ENCODE measurements at regions of chr14 and their contacts with region 1.

Region 1: GRCh38 chr14:91177073-91178034 is 63.5 kb downstream of the DGLUCY start:
- DNase-seq: peak; percentile 84
- H3K4me3 Mint-ChIP-seq: no peak overlapping the region
- H3K27ac Mint-ChIP-seq: peak overlapping the region; percentile 58
- H3K4me1 Mint-ChIP-seq: peaks cover 9% of the 10 kb centered on the region
- H3K27me3 Mint-ChIP-seq: no peaks in the 10 kb centered on the region

Region 2: DNA sequence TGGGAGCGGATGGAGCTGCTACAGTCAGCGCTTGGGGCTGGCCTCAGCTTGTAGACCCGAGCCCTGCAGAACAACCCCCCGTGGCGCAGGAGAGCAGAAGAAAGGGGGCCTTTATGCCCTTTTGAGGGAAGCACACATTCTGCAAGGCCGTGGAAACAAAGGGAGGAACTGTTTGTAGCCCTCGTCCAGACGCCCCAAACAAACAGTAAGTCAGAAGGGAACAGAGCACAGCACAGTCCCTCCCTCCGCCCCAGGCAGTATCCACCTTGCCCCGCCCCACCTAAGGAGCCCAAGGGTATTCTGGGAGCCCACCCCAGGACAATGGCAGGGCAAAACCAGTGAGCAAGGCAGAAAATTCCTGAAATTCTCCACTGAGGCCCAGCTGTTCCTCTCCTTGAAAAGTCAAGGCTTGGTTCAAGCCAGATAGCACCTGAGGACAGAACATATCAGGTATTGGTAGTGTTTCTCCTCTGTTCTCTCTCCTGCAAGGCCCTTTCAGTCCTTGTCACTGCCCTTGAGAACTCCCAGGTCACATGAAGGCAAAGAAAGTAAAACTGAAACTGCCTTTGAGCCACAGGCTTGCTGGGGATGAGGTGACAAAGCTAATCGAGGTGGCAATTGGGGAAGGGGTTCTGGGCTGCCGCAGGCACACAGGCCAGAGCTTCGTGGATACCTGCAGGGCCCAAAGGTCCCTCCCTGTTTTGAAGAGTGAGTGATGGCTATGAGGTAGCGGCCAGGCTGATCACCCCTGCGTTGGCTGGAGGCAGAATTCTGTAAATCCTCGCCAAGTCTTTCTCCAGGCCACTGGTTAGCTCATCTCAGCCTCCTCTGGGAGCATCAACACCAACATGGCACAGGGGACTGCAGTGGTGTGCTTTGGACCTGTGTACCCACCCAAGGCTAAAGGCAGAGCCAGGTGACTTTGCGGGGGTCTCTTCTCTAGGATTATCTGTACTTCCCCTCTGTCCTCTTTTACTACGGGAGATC is 63.0 kb before region 1 on chr14:
- CTCF ChIA-PET with region 1: interaction called, 10 read pairs
- intact Hi-C with region 1: no loop called
- DNase-seq: peak; percentile 82
- H3K4me3 Mint-ChIP-seq: peak overlapping the region; percentile 94
- H3K27ac Mint-ChIP-seq: peak overlapping the region; percentile 95
- H3K4me1 Mint-ChIP-seq: peaks cover 60% of the 10 kb centered on the region
- H3K27me3 Mint-ChIP-seq: no peaks in the 10 kb centered on the region

Region 3: DNA sequence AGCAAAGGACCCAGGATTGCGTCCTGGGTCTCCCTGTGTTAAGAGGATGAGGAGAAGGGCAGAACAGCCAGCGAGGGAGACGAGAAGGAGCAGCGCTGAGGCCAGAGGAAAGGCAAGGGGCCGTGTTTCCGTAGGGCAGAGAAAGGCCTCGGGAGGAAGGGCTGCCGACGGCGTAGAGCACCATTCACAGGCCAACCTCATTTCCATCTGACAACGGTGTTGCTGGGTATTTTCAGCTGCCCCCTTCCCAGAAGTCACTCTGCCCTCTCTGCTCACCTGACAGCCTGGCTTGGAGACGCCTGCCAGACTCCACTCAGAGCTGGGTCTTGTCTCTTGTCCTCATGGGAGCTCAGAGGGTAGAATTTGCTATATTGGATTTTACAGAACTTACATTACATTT is 15.7 kb after region 1 on chr14:
- CTCF ChIA-PET with region 1: interaction called, 24 read pairs
- intact Hi-C with region 1: no loop called
- DNase-seq: no peak
- H3K4me3 Mint-ChIP-seq: no peak overlapping the region
- H3K27ac Mint-ChIP-seq: peak overlapping the region; percentile 9
- H3K4me1 Mint-ChIP-seq: peaks cover 19% of the 10 kb centered on the region
- H3K27me3 Mint-ChIP-seq: no peaks in the 10 kb centered on the region

Region 4: DNA sequence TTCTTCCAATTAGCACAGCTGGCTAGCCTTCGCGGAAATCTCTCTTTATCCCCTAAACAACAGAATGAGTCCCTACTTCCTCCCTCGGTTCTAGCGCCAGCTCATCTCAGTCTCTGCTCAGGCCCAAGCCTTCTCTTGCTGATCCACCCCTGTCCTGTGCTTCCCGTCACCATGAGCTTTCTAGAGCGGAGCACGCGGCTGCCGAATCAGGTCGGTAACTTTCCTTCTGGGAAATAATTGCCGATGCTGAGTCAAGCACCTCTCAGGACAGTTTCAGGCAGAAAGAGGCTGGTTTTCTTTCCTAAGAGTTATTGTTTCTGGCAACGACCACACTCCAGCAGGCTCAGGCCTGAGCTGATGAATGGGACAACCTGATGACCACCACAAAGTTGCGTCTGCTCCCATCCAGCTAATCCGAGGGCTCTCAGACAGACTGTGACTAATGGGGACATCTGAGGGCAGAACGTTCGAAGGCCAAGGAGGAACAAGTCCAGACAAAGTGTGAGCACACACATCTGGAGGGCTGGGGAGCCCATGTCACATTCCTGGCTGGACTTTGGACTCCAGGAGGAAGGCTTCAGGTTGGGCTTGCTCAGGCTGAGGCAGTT is 80.8 kb after region 1 on chr14:
- CTCF ChIA-PET with region 1: interaction called, 14 read pairs
- intact Hi-C with region 1: no loop called
- DNase-seq: peak; percentile 40
- H3K4me3 Mint-ChIP-seq: no peak overlapping the region
- H3K27ac Mint-ChIP-seq: no peak overlapping the region
- H3K4me1 Mint-ChIP-seq: peaks cover 49% of the 10 kb centered on the region
- H3K27me3 Mint-ChIP-seq: no peaks in the 10 kb centered on the region

Region 5: DNA sequence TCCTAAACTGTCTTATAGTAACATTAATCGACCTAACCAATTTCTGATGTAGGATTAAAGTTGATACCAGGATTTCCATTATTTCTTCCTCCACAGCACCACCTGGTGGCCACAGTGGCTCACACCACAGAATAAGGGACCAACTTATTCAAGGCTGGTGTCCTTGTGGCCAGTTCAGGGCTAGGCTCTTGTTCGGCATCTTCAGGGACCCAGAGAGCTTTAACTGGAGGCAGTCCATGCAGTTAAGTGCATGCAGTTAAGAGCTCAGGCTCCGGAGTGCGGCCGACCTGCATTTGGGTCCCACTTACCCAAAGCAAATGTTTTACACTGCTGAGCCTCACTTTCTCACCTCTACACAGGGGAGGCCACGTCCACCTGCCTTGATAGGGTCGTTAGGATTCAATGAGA is 109.2 kb after region 1 on chr14:
- CTCF ChIA-PET with region 1: interaction called, 203 read pairs
- intact Hi-C with region 1: loop called (anchors 1 kb)
- DNase-seq: peak; percentile 90
- H3K4me3 Mint-ChIP-seq: no peak overlapping the region
- H3K27ac Mint-ChIP-seq: peak overlapping the region; percentile 74
- H3K4me1 Mint-ChIP-seq: peaks cover 4% of the 10 kb centered on the region
- H3K27me3 Mint-ChIP-seq: no peaks in the 10 kb centered on the region